ENCODE measurements at regions of chr11 and their contacts with region 1.

Region 1: DNA sequence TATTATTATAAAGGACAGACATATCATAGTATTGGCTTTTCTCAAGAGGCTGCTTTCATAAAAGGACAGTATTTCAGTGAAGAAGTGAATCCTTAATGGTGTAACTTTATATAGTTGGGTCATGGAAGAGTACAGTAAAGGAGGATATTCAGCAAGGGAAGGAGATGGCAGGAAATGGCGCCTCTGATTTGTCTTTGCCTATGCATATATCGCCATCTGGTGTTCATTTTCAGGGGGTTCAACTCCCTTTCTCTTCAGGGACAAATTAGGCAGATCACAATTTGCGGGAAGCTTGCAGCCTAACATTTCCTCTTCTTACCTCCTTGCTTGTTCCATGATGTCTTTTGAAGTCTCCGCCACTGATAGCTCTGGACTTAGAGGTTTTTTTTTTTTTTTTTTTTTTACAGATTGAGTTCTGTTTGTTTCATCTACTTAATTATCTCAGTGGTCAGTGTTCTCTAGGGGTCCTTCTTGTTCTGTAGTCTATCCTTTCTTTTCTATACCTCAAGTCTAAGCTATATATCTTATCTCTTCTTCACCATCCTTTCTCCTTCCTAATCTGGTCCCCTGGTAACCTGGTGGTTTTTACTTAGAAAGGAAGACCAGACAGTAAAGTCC is 21.8 kb upstream of the RRM1 start:
- DNase-seq: peak; percentile 70
- H3K4me3 ChIP-seq: no peak overlapping the region; a peak in 1 of 4 replicates
- H3K27ac ChIP-seq: peak overlapping the region in 1 of 2 experiments; percentile 72; a peak in 2 of 4 replicates
- H3K4me1 ChIP-seq: peaks cover 0 to 12% of the 10 kb centered on the region in 2 experiments; a peak in 2 of 4 replicates
- H3K27me3 ChIP-seq: no peaks in the 10 kb centered on the region
- CTCF ChIP-seq: peak; percentile 88
- EP300 ChIP-seq: no peak
- RAD21 ChIP-seq: peak; percentile 99

Region 2: DNA sequence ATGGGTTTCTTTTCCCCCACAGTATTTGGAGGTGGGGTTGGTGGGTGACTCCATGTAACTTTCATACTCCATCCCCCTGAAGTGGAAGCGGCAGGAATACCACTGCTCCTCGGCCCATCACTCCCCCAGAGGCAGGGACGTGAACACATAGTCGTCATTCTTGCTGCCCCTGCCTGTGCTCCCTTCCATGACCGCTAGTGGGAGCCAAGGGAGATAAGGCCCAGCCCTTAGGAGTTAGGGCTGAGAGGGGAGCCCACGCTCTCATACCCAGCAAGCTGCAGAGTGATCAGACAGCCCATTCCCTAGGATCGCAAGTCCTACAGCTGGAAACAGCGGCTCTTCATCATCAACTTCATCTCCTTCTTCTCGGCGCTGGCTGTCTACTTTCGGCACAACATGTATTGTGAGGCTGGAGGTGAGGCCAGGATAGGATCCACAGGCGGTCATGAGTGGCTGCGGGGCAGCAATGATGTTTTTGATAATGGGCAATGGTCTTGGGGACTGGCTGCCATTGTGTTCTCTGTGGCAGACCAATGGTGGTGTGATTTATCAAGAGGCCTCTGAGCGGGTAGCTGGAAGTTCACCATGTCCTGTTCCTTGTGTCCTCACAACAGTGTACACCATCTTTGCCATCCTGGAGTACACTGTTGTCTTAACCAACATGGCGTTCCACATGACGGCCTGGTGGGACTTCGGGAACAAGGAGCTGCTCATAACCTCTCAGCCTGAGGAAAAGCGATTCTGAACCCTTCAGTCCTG is 247.9 kb before region 1 on chr11:
- CTCF ChIA-PET with region 1: interaction called, 17 read pairs
- POLR2A ChIA-PET with region 1: no interaction called
- DNase-seq: peak; percentile 58
- H3K4me3 ChIP-seq: no peak overlapping the region; a peak in 1 of 4 replicates
- H3K27ac ChIP-seq: no peak overlapping the region
- H3K4me1 ChIP-seq: no peaks in the 10 kb centered on the region
- H3K27me3 ChIP-seq: no peaks in the 10 kb centered on the region
- CTCF ChIP-seq: peak; percentile 52
- EP300 ChIP-seq: no peak
- RAD21 ChIP-seq: no peak

Region 3: GRCh38 chr11:3849297-3849874 is 223.4 kb before region 1 on chr11:
- CTCF ChIA-PET with region 1: interaction called, 636 read pairs
- POLR2A ChIA-PET with region 1: no interaction called
- DNase-seq: peak; percentile 53
- H3K4me3 ChIP-seq: peak overlapping the region in 1 of 2 experiments; percentile 23; a peak in 1 of 4 replicates
- H3K27ac ChIP-seq: no peak overlapping the region
- H3K4me1 ChIP-seq: peaks cover under 1 to 3% of the 10 kb centered on the region in 2 experiments; a peak in 2 of 4 replicates
- H3K27me3 ChIP-seq: no peaks in the 10 kb centered on the region
- CTCF ChIP-seq: peak; percentile 80
- EP300 ChIP-seq: no peak
- RAD21 ChIP-seq: peak; percentile 69

Region 4: GRCh38 chr11:3927133-3927796 is 145.5 kb before region 1 on chr11:
- CTCF ChIA-PET with region 1: interaction called, 32 read pairs
- POLR2A ChIA-PET with region 1: no interaction called
- DNase-seq: no peak
- H3K4me3 ChIP-seq: no peak overlapping the region
- H3K27ac ChIP-seq: no peak overlapping the region
- H3K4me1 ChIP-seq: peaks cover 0 to 7% of the 10 kb centered on the region in 2 experiments; a peak in 2 of 4 replicates
- H3K27me3 ChIP-seq: no peaks in the 10 kb centered on the region
- CTCF ChIP-seq: no peak
- EP300 ChIP-seq: no peak
- RAD21 ChIP-seq: peak; percentile 33

Region 5: DNA sequence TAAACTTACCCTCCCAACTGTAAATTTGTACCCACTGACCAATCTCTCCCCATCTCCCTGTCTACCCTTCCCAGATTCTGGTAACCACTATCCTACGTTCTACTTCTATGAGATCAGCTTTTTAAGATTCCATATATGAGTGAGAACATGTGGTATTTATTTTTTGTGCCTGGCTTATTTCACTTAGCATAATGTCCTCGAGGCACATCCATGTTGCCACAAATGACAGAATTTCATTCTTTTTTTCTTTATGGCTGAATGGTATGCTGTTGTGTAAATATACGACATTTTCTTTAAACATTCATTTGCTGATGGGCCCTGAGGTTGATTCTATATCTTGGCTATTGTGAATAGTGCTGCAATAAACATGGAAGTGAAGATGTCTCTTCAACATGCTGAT is 52.9 kb before region 1 on chr11:
- CTCF ChIA-PET with region 1: interaction called, 25 read pairs
- POLR2A ChIA-PET with region 1: no interaction called
- DNase-seq: peak; percentile 46
- H3K4me3 ChIP-seq: no peak overlapping the region
- H3K27ac ChIP-seq: peak overlapping the region; percentile 35 to 39; a peak in 3 of 4 replicates
- H3K4me1 ChIP-seq: peaks cover 1 to 10% of the 10 kb centered on the region in 2 experiments; a peak in 3 of 4 replicates
- H3K27me3 ChIP-seq: no peaks in the 10 kb centered on the region
- CTCF ChIP-seq: no peak
- EP300 ChIP-seq: peak in 1 of 2 experiments; percentile 80; a peak in 2 of 4 replicates
- RAD21 ChIP-seq: 0 out of 2 replicates have a peak, but pooled peaks have one; percentile 14

Region 6: DNA sequence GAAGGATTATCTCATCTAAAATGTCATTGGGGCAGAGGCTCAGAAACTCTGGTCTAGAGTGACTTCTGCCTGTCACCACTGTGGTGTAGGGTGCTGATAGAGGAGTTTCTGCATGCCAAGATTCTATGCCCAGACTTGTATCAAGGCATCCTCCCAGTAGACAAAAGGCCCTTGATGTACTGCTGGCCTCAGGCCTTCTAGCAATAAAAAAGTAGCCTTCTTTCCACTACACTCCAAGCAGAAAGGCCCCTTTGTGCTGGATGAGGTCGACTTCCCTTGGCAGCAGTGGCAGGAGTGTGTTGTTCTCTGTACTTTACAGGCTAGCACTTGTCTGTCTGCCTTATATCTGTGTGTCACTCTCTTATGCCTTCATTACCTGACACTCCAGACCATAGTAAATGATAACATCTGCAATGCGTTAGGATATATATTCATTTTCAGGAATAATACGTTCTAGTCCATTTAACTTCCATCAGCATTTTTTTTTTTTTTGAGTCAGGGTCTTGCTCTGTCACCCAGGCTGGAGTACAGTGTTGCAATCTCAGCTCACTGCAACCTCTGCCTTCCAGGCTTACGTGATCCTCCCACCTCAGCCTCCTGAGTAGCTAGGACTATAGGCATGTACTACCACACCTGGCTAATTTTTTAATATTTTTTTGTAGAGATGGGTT is 27.7 kb before region 1 on chr11:
- CTCF ChIA-PET with region 1: interaction called, 12 read pairs
- POLR2A ChIA-PET with region 1: no interaction called
- DNase-seq: no peak
- H3K4me3 ChIP-seq: no peak overlapping the region
- H3K27ac ChIP-seq: peak overlapping the region; percentile 3 to 60; a peak in 3 of 4 replicates
- H3K4me1 ChIP-seq: peaks cover 12 to 14% of the 10 kb centered on the region in 2 experiments; a peak in 3 of 4 replicates
- H3K27me3 ChIP-seq: no peaks in the 10 kb centered on the region
- CTCF ChIP-seq: no peak
- EP300 ChIP-seq: 0 out of 4 replicates have a peak, but pooled peaks of 1 of the 2 experiments have one; percentile 22
- RAD21 ChIP-seq: no peak

Region 7: DNA sequence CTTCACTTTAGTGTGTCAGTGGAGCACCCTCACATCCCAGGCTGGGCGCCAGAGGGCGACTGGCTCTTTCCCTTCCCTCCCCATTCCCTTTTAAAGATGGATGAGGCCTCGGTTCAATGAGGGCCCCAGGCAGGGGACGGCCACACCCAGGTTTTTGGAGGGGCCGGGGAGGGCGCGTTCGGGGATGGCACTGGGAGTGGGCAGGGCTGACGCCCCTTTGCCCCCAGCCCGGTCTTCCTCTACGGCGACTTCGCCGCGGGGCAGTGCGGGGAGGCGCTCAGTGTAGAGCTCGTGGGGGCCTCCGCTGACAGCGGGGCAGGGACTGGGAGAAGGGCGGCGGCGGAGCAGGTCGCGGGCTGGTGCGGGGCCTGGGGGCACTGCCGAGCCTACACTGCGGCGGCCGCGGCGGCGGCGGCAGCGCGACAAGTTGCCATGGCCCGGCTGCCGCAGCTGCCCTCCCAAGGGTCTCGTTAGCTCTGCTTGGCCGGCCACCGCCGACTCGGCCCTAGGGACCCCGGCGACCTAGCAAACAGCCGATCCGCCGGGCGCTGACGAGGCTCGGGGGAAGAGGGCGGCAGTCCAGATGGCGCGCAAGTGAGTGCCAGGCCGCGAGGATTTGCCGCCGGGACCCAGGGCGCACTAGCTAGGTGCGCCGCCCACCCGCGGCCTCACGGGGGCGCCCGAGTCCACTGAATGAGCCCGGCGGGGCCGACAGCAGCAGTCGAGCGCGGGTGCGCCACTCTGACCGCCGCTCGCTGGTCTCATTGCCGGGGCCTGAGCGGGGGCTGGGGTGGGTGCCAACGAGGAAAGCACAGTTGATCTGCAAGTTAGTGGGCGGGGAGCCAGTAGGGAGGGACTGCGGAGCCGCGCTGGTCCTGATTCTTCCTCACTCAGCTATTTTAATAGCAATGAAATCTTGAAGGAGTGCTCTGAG is 114.5 kb after region 1 on chr11:
- CTCF ChIA-PET with region 1: no interaction called
- POLR2A ChIA-PET with region 1: no interaction called
- DNase-seq: peak; percentile 94
- H3K4me3 ChIP-seq: peak overlapping the region; percentile 58 to 66
- H3K27ac ChIP-seq: no peak overlapping the region
- H3K4me1 ChIP-seq: peaks cover 0 to 3% of the 10 kb centered on the region in 2 experiments; a peak in 1 of 4 replicates
- H3K27me3 ChIP-seq: peaks cover 23% of the 10 kb centered on the region; the same call in 1 of the 2 replicates
- CTCF ChIP-seq: peak; percentile 74
- EP300 ChIP-seq: no peak; a peak in 1 of 4 replicates
- RAD21 ChIP-seq: peak; percentile 92

Measured in SK-N-SH (cell line).